CD4-positive, alpha-beta memory T cell (primary cell): ENCODE measurements at regions of chr7 and their contacts with region 1.

Region 1: GRCh38 chr7:30504347-30505173 is at the start of gene GGCT:
- DNase-seq: peak; percentile 94 to 98 (median 96)
- H3K4me3 ChIP-seq: peak within 1 kb of the TSS; percentile 96 to 97
- H3K4me3 Mint-ChIP-seq: peak within 1 kb of the TSS; percentile 90 to 96 (median 94)
- H3K27ac ChIP-seq: peak within 1 kb of the TSS; percentile 72
- H3K27ac Mint-ChIP-seq: peak within 1 kb of the TSS; percentile 76 to 98 (median 94)
- H3K4me1 ChIP-seq: peaks cover 26% of the 10 kb centered on the region
- H3K4me1 Mint-ChIP-seq: peaks cover 26 to 32% (median 30%) of the 10 kb centered on the region in 4 donors
- H3K27me3 ChIP-seq: no peaks in the 10 kb centered on the region
- H3K27me3 Mint-ChIP-seq: no peaks in the 10 kb centered on the region
- total RNA-seq, gene GGCT: 11.0 to 11.9 TPM

Region 2: DNA sequence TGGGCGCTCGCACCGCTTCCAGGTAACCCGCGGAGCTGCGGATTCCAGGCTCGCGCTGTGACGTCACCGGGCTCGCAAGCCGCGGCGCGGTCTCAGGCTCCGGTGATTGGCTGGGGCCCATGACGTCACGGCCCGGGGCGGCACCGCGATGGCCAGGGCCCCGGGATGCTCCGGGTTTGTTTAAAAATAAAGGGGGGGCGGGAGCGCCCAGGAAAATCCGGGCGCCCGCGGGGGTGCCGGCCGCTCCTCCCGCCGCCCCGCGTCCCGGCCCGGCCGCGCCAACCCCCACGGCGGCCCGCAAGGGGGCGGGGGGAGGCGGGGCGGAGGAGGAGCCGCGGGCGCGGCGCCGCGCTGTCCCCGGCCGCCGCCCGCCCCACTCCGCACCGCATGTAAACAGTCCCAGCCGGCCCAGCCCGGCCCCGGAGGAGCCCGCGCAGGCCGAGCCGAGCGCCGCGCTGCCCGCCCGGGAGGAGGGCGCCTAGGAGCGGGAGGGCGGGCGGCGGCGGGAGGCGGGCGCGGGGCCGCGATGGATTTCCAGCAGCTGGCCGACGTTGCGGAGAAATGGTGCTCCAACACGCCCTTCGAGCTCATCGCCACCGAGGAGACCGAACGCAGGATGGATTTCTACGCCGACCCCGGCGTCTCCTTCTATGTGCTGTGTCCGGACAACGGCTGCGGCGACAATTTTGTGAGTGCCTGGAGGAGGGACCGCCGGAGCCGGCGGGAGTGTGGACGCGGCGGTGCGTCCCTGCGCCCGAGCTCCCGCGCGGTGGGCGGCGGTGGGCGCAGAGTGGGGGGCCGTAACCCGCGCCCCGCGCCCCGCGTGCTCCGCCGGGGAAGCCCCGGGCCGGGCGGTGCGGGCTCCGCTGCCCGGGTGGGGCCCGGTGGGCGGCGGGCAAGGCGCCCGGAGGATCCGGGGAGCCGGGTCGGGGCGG is 369.7 kb before region 1 on chr7 and contains the start of gene MTURN:
- CTCF ChIA-PET with region 1: no interaction called
- POLR2A ChIA-PET with region 1: no interaction called
- intact Hi-C with region 1: loop called (anchors 5 kb)
- DNase-seq: peak; percentile 86 to 92 (median 89)
- H3K4me3 ChIP-seq: peak within 1 kb of the TSS; percentile 66 to 69
- H3K4me3 Mint-ChIP-seq: peak within 1 kb of the TSS; percentile 87 to 96 (median 94)
- H3K27ac ChIP-seq: peak within 1 kb of the TSS; percentile 17
- H3K27ac Mint-ChIP-seq: peak within 1 kb of the TSS; percentile 75 to 95 (median 95)
- H3K4me1 ChIP-seq: peaks cover 14% of the 10 kb centered on the region
- H3K4me1 Mint-ChIP-seq: peaks cover 5 to 23% (median 12%) of the 10 kb centered on the region in 4 donors
- H3K27me3 ChIP-seq: no peaks in the 10 kb centered on the region
- H3K27me3 Mint-ChIP-seq: no peaks in the 10 kb centered on the region
- total RNA-seq, gene MTURN: 18.1 to 19.2 TPM

Region 3: DNA sequence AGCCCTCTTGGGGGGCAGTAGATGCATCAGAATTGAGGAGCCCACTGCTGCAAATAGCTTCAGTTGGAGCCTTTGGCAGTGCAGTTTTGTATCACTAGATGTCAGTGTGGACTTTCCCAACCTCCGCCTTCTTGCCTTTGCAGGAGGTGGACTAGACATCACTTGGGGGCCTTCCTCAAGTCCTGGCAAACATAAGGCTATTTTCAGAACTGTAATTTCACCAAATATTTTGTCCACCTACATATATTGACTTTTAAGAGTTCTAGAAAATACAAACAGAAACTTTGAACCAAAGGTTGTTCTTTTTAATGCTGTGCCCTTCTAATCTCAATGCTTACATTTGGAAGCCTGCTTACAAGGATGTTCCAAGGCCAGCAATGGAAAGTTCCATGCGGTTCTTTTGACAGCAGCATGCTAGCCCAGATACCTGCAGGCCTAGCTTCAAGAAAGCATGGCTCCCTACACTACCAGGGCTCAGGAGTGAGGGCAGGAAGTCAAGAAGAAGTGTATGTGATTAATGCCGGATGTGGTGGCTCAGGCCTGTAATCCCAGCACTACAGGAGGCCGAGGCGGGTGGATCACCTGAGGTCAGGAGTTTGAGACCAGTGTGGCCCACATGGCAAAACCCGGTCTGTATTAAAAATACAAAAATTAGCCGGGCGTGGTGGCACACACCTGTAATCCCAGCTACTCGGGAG is 228.2 kb before region 1 on chr7:
- CTCF ChIA-PET with region 1: interaction called, 5 read pairs
- POLR2A ChIA-PET with region 1: no interaction called
- intact Hi-C with region 1: loop called (anchors 2 kb)
- DNase-seq: peak; percentile 41 to 53 (median 44)
- H3K4me3 ChIP-seq: no peak overlapping the region
- H3K4me3 Mint-ChIP-seq: peak overlapping the region in 1 of 8 donors; percentile 20
- H3K27ac ChIP-seq: no peak overlapping the region
- H3K27ac Mint-ChIP-seq: no peak overlapping the region
- H3K4me1 ChIP-seq: no peaks in the 10 kb centered on the region
- H3K4me1 Mint-ChIP-seq: peaks cover 3 to 8% (median 4%) of the 10 kb centered on the region in 4 donors
- H3K27me3 ChIP-seq: no peaks in the 10 kb centered on the region
- H3K27me3 Mint-ChIP-seq: peaks cover 0 to 1% of the 10 kb centered on the region in 2 donors

Region 4: GRCh38 chr7:30478349-30479201 is 26.0 kb before region 1 on chr7 and contains the start of gene NOD1:
- CTCF ChIA-PET with region 1: interaction called, 6 read pairs
- POLR2A ChIA-PET with region 1: interaction called, 21 read pairs
- intact Hi-C with region 1: loop called (anchors 1 kb)
- DNase-seq: peak; percentile 54 to 72 (median 67)
- H3K4me3 ChIP-seq: peak within 1 kb of the TSS; percentile 70 to 98
- H3K4me3 Mint-ChIP-seq: peak within 1 kb of the TSS in 7 of 8 donors; percentile 94 to 98 (median 95)
- H3K27ac ChIP-seq: peak within 1 kb of the TSS; percentile 79
- H3K27ac Mint-ChIP-seq: peak within 1 kb of the TSS in 6 of 7 donors; percentile 77 to 96 (median 90)
- H3K4me1 ChIP-seq: peaks cover 44% of the 10 kb centered on the region
- H3K4me1 Mint-ChIP-seq: peaks cover 36 to 59% (median 41%) of the 10 kb centered on the region in 4 donors
- H3K27me3 ChIP-seq: no peaks in the 10 kb centered on the region
- H3K27me3 Mint-ChIP-seq: no peaks in the 10 kb centered on the region
- total RNA-seq, gene NOD1: 20.7 to 21.3 TPM

Region 5: GRCh38 chr7:30727061-30727945 is 222.7 kb after region 1 on chr7:
- CTCF ChIA-PET with region 1: no interaction called
- POLR2A ChIA-PET with region 1: interaction called, 3 read pairs
- intact Hi-C with region 1: loop called (anchors 2 kb)
- DNase-seq: peak; percentile 77 to 82 (median 81)
- H3K4me3 ChIP-seq: peak overlapping the region; percentile 47 to 70
- H3K4me3 Mint-ChIP-seq: peak overlapping the region; percentile 87 to 96 (median 92)
- H3K27ac ChIP-seq: peak overlapping the region; percentile 57
- H3K27ac Mint-ChIP-seq: peak overlapping the region; percentile 85 to 96 (median 94)
- H3K4me1 ChIP-seq: peaks cover 60% of the 10 kb centered on the region
- H3K4me1 Mint-ChIP-seq: peaks cover 38 to 66% (median 50%) of the 10 kb centered on the region in 4 donors
- H3K27me3 ChIP-seq: no peaks in the 10 kb centered on the region
- H3K27me3 Mint-ChIP-seq: no peaks in the 10 kb centered on the region